HEK293 (cell line): ENCODE measurements at regions of chr2 and their contacts with region 1.

Region 1: DNA sequence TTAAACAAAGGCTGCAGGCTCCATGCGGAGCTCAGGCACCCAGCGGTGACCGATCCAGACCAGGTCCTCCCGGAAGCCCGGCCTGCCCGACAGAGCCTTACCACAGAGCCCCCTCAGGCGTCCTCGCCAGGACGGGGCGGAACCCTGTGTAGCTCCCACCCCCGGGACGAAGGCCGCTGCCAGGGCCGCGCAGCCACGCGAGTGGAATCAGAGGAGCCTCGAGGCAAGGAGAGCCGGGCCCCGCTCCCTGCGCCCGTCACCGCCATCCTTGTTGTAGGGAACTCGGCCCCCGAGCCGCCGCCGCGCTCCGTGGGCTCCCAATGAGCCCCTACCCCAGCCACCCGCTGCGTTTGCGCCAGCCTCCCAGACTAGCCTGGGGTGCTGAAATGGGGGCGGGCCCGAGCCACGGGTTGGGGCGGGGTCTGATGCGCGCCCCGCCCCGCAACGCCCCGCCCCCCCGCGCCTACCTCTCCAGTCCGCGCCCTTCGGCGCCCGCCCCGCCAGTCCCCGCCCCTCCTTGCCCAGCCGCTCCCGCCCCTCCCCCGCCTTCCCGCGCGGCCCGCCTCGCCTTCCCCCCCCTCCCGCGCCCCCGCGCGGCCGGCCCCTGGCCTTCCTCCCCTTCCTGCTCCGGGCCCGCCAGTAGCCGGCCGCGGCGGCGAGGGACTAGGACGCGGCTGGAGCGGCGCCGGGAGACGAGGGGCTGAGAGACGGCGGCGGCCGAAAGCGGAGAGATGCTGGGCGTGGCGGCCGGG is at the start of gene LIMS1:
- H3K4me3 ChIP-seq: peak within 1 kb of the TSS; percentile 72
- H3K27ac ChIP-seq: peak within 1 kb of the TSS; percentile 91
- H3K4me1 ChIP-seq: peaks cover 17% of the 10 kb centered on the region
- CTCF ChIP-seq: no peak; the same call in 1 of the 2 replicates

Region 2: DNA sequence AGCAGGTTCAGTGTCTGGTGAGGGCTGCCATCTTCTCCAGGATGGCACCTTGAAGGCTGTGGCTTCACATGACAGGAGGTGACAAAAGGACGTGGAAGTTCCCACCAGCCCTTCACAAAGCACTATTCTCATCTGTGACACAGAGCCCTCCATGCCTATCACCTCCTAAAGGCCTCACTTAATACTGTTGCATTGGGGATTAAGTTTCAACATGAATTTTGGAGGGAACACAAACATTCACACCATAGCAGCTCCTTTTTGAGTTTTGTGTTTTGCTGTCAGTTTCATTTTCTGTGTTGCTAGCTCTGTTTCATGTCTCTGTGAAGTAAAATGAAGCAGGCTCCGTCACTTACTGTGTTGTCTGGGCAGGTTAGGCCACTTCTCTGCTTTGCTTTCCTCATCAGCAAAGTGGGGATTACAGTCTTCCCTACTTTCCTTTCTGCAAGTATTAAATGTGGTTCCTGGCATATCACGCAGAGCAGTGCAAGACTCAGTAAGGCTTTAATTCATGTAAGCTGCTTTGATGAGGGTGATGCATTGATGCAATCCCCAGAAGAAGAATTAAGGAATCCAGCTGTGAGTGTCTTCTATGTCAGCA is 31.9 kb after region 1 on chr2:
- CTCF ChIA-PET with region 1: interaction called, 3 read pairs
- POLR2A ChIA-PET with region 1: interaction called, 10 read pairs
- H3K4me3 ChIP-seq: no peak overlapping the region
- H3K27ac ChIP-seq: no peak overlapping the region
- H3K4me1 ChIP-seq: 0 out of 2 replicates have a peak, but pooled peaks cover 3% of the 10 kb centered on the region
- CTCF ChIP-seq: no peak

Region 3: GRCh38 chr2:108594132-108594981 is 60.3 kb after region 1 on chr2:
- CTCF ChIA-PET with region 1: interaction called, 3 read pairs
- POLR2A ChIA-PET with region 1: interaction called, 13 read pairs
- H3K4me3 ChIP-seq: no peak overlapping the region
- H3K27ac ChIP-seq: no peak overlapping the region
- H3K4me1 ChIP-seq: peaks cover 18% of the 10 kb centered on the region
- CTCF ChIP-seq: no peak